Endothelial cell of umbilical vein (primary cell): ENCODE measurements at regions of chr20 and their contacts with region 1.

Region 1: DNA sequence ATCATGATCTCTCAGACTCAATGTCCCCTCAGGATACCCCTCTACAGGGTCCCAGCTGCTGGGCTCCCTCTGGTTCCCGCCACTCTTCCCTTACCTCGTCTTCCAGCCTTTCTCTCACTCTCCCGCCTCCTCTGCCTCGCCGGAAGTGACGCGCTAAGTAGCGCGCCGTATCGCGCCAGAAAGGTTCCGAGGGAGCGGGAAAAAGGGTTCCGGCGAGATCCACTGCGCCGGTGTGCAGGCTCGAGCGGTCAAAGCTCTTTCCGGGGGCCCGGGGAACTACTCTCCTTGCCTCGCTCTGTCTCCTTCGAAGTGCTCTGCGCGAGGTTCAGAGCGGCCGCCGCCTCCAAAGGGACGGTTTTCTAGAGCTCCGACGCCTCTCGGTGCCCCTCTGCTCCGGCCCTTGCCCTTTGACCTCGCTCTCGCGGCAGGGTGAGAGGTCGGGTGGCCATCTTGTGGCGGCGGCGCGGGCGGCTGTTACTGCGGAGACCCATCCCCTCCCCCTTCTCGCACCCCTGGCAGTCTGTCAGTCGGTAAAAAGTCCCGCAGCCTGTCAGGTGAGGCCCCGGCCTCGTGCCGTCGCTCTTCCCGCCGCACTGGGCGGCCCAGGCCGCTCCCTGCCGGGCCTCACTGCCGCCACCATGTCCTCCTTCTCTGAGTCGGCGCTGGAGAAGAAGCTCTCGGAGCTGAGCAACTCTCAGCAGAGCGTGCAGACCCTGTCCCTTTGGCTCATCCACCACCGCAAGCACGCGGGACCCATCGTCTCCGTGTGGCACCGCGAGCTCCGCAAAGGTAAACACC is at the starts of genes RPRD1B and TTI1:
- DNase-seq: peak; percentile 92
- H3K4me3 ChIP-seq: peak within 1 kb of the TSS; percentile 39 to 74 (median 64)
- H3K27ac ChIP-seq: peak within 1 kb of the TSS; percentile 75
- H3K4me1 ChIP-seq: peaks cover 31% of the 10 kb centered on the region
- H3K27me3 ChIP-seq: no peaks in the 10 kb centered on the region
- CTCF ChIP-seq: no peak
- POLR2A ChIP-seq: peak; percentile 78
- total RNA-seq, gene RPRD1B: 24.5 and 29.3 TPM in 2 replicates
- total RNA-seq, gene TTI1: 21.4 and 23.2 TPM in 2 replicates

Region 2: GRCh38 chr20:38043512-38044300 is 10.2 kb after region 1 on chr20:
- CTCF ChIA-PET with region 1: interaction called, 15 read pairs
- POLR2A ChIA-PET with region 1: interaction called, 3 read pairs
- dilution Hi-C with region 1: no loop called
- intact Hi-C with region 1: no loop called
- DNase-seq: peak; percentile 16
- H3K4me3 ChIP-seq: no peak overlapping the region
- H3K27ac ChIP-seq: no peak overlapping the region
- H3K4me1 ChIP-seq: no peaks in the 10 kb centered on the region
- H3K27me3 ChIP-seq: no peaks in the 10 kb centered on the region
- CTCF ChIP-seq: no peak
- POLR2A ChIP-seq: no peak

Region 3: GRCh38 chr20:38304845-38305447 is 271.4 kb after region 1 on chr20:
- CTCF ChIA-PET with region 1: no interaction called
- POLR2A ChIA-PET with region 1: no interaction called
- dilution Hi-C with region 1: no loop called
- intact Hi-C with region 1: no loop called
- DNase-seq: peak; percentile 30
- H3K4me3 ChIP-seq: no peak overlapping the region
- H3K27ac ChIP-seq: no peak overlapping the region
- H3K4me1 ChIP-seq: no peaks in the 10 kb centered on the region
- H3K27me3 ChIP-seq: peaks cover 2% of the 10 kb centered on the region in 2 experiments
- CTCF ChIP-seq: peak; percentile 40 to 70
- POLR2A ChIP-seq: no peak

Region 4: GRCh38 chr20:38581013-38581412 is 547.5 kb after region 1 on chr20 and contains the start of gene ADIG:
- CTCF ChIA-PET with region 1: no interaction called
- POLR2A ChIA-PET with region 1: no interaction called
- dilution Hi-C with region 1: no loop called
- intact Hi-C with region 1: no loop called
- DNase-seq: no peak
- H3K4me3 ChIP-seq: no peak within 1 kb of the TSS
- H3K27ac ChIP-seq: no peak within 1 kb of the TSS
- H3K4me1 ChIP-seq: no peaks in the 10 kb centered on the region
- H3K27me3 ChIP-seq: peaks cover 0 to 6% of the 10 kb centered on the region in 2 experiments
- CTCF ChIP-seq: no peak
- POLR2A ChIP-seq: no peak
- total RNA-seq, gene ADIG: not detected in 2 replicates